H1 (cell line): ENCODE measurements at regions of chr1 and their contacts with region 1.

Region 1: DNA sequence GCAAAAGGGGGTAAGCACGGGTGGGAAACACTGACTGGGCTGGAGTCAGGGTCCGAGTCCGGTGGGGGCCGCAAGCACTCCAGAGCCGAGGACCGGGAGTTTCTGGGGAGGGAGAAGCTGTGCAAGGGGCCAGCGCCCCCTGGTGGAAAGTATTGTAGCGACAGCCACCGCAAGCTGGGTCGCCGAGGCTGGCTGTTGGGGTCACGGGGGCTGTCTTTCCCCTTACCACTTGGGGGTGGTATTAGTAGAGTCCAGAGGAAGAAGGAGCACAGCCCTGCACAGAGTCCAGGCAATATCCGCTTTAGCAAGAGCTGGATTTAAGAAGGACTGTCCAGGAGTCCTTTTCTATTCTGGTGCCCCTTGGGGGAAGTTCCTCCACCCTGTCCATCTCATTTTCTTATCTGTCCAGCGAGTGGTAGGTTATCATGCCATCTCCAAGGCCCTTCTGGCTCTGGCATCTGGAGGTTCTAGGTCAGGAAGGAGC is 17.9 kb upstream of the ETV3 start:
- DNase-seq: peak; percentile 69 to 98
- H3K4me3 ChIP-seq: no peak overlapping the region
- H3K27ac ChIP-seq: no peak overlapping the region
- H3K4me1 ChIP-seq: peaks cover 3 to 11% (median 6%) of the 10 kb centered on the region in 4 experiments
- H3K27me3 ChIP-seq: no peaks in the 10 kb centered on the region; a peak in 1 of 7 replicates
- CTCF ChIP-seq: peak; percentile 92 to 98 (median 97)
- EP300 ChIP-seq: peak in 1 of 2 experiments; percentile 22; a peak in 1 of 3 replicates
- POLR2A ChIP-seq: no peak; a peak in 1 of 3 replicates
- RAD21 ChIP-seq: peak; percentile 87 to 91

Region 2: DNA sequence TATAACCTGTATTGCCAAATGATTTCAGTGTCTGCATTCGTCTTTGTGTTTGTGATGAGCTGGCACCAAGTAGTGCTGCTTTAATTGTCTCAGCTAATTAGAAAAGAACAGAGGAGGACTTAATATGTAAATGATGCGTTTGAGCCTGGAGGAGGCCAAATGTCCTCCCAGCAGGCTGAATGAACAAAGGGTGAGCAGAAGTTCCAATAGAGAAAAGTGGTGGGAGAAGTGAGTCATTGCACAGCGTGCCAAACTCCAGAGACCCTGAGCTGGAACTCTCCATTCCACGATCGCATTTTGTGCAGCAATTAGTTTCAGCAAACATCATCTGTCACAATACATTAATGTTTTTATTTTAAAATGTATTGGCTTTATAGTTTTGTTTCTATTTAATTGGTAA is 74.4 kb before region 1 on chr1:
- CTCF ChIA-PET with region 1: interaction called, 218 read pairs
- POLR2A ChIA-PET with region 1: no interaction called
- DNase-seq: no peak
- H3K4me3 ChIP-seq: no peak overlapping the region
- H3K27ac ChIP-seq: no peak overlapping the region
- H3K4me1 ChIP-seq: peaks cover 2 to 5% (median 3%) of the 10 kb centered on the region in 4 experiments; a peak in 4 of 7 replicates
- H3K27me3 ChIP-seq: no peaks in the 10 kb centered on the region
- CTCF ChIP-seq: no peak
- EP300 ChIP-seq: no peak
- POLR2A ChIP-seq: no peak
- RAD21 ChIP-seq: no peak

Region 3: DNA sequence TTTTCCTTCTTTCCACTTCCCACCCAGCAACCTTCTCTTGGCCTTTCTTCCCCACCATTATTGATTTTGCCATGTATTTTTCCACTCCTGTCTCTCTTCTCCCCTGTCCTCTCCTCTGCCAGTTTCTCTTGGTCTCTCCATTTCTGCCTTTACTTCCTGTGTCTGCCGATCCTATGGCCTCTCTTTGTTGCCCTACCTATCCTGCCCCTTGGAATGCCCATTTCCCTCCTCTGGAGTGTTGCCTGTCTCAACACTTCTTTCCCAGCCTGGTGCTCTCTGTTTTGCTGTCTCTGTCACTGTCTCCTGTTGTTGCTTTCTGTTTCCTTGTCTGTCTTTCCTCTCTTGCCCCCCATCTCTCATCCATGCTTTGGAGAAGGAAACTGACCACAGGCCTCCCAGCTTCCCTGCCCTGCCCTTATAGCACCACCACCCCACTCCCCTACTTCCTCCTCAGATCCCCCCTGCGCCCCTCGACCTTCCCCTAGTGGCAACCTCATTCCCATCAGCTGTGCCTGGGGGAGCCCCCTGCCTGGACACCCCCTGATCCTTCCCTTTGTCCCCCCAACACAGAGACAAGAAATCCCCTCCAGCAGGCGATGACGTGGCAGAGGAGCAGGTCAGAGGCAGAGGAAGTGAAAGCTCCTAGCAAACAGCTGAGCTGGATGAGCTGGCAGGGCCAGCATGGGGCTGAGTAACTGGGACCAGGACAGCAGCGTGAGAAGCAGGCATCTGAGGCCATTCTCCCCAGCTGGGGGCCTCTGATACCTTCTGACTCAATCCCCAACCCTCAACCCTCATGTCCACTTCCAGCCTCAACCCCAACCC is 49.9 kb before region 1 on chr1:
- CTCF ChIA-PET with region 1: interaction called, 12 read pairs
- POLR2A ChIA-PET with region 1: no interaction called
- DNase-seq: no peak
- H3K4me3 ChIP-seq: no peak overlapping the region
- H3K27ac ChIP-seq: no peak overlapping the region
- H3K4me1 ChIP-seq: peaks cover 0 to 7% (median under 1%) of the 10 kb centered on the region in 4 experiments; a peak in 4 of 7 replicates
- H3K27me3 ChIP-seq: peaks cover 0 to 3% (median 1%) of the 10 kb centered on the region in 4 experiments; a peak in 3 of 7 replicates
- CTCF ChIP-seq: no peak
- EP300 ChIP-seq: no peak
- POLR2A ChIP-seq: no peak
- RAD21 ChIP-seq: no peak

Region 4: DNA sequence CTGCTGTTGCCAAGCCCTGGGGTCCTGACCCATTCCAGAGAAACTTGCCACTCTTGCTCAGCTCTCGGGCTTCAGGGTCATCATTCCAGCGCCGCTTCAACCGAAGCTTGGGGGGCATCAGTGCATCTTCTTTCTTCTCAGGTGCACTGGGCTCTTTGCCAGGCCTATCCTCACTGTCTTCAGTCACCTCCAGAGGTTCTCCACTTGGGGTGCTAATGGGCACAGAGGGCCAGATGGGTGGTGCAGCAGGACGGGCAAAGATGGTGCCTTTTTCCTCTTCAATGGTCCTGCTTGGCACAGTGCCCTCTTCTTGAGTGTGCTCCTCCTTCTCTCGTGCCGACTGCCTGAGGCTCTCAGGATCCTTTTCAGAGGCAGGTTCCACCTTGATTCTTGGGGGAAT is 31.2 kb before region 1 on chr1:
- CTCF ChIA-PET with region 1: interaction called, 10 read pairs
- POLR2A ChIA-PET with region 1: interaction called, 3 read pairs
- DNase-seq: no peak
- H3K4me3 ChIP-seq: no peak overlapping the region
- H3K27ac ChIP-seq: no peak overlapping the region
- H3K4me1 ChIP-seq: peaks cover 0 to 6% (median 0%) of the 10 kb centered on the region in 4 experiments; a peak in 1 of 7 replicates
- H3K27me3 ChIP-seq: no peaks in the 10 kb centered on the region
- CTCF ChIP-seq: peak in 2 of 3 experiments; percentile 30 to 31; a peak in 2 of 4 replicates
- EP300 ChIP-seq: no peak
- POLR2A ChIP-seq: no peak
- RAD21 ChIP-seq: no peak; a peak in 1 of 4 replicates